ENCODE measurements at regions of chr7 and their contacts with region 1.

Region 1: GRCh38 chr7:86720306-86720705 is 76.6 kb downstream of the GRM3 start:
- DNase-seq: no peak
- H3K4me3 ChIP-seq: no peak overlapping the region
- H3K27ac ChIP-seq: peak overlapping the region in 6 of 59 donors; percentile 8 to 59 (median 40)
- H3K27me3 ChIP-seq: no peaks in the 10 kb centered on the region
- CTCF ChIP-seq: no peak

Region 2: DNA sequence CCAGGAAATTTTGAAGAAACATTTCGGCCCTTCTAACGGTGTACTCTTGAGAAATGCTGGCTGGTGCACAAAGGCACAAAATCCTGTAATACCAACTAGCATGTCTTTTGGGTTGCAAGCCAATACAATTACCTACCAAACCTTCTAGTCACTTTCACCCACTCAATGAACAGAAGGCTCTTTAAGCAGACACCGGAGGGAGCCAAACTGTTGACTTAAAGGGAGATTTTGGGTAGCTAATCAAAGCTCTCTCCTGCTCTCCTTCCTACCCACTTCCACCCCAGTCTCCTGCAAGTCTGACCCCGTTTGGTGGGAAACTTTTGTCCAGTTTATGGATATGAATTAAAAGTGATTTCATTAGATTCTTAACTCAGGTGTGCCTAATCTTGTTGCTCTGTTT is 52.6 kb before region 1 on chr7:
- intact Hi-C with region 1: no loop called
- DNase-seq: no peak
- H3K4me3 ChIP-seq: no peak overlapping the region
- H3K27ac ChIP-seq: peak overlapping the region; percentile 60 to 99 (median 97)
- H3K27me3 ChIP-seq: no peaks in the 10 kb centered on the region
- CTCF ChIP-seq: peak in 13 of 56 donors; percentile 9 to 41 (median 25)

Region 3: DNA sequence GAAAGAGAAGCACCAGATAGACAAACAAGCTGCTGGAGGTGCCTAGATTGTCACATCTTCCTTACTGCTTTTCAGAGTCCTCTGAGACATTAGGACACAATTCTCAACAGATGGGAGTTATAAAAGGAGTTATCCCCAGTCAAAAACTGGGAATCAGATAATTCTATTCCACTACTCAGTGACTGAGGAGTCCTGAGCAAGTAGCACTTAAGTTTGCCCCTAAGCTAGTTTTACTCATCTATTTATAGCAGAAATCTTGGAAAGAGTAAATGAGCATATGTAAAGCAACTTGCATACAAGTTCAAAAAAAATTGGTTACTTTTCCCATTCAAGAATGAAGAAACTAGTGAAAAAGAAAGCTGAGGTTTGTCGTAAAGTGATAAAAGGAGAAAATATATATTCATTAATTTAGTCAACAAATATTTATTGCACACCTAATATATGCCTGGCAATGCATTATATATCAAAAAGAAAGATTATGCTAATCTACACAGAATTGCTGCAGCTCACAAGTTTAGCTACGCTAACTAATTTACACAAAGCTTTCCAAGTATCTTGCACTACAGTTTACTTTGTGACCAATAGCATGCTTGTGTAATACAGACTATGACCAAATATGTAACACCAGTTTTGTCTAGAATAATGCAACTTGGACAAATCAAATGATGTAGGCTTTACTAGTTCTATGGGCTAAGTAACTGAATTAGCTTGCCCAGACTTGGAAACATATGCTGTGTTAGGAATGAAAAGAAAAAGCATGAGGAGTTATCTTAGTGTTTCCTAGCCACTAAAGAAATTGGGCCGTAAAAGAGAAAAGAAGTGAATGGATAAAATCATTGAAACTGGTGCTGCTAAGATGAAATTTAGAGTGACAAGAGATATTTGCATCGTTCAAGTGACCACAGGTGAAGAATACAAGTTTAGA is 29.7 kb after region 1 on chr7:
- intact Hi-C with region 1: loop called in 1 of 2 experiments (anchors 5 kb)
- DNase-seq: no peak
- H3K4me3 ChIP-seq: no peak overlapping the region
- H3K27ac ChIP-seq: peak overlapping the region in 19 of 59 donors; percentile 1 to 71 (median 37)
- H3K27me3 ChIP-seq: no peaks in the 10 kb centered on the region
- CTCF ChIP-seq: no peak

Measured in dorsolateral prefrontal cortex (tissue), 120 donors.